ENCODE measurements at regions of chr21 and their contacts with region 1.

Region 1: GRCh38 chr21:46183910-46184624 is at the start of gene SPATC1L:
- DNase-seq: no peak
- H3K4me3 ChIP-seq: peak within 1 kb of the TSS; percentile 58
- H3K27ac ChIP-seq: no peak within 1 kb of the TSS
- H3K27me3 ChIP-seq: no peaks in the 10 kb centered on the region
- CTCF ChIP-seq: no peak
- polyA plus RNA-seq, gene SPATC1L: 1.6 and 2.9 TPM in 2 replicates

Region 2: GRCh38 chr21:45930231-45930760 is 253.8 kb before region 1 on chr21:
- CTCF ChIA-PET with region 1: interaction called, 17 read pairs
- POLR2A ChIA-PET with region 1: no interaction called
- DNase-seq: no peak
- H3K4me3 ChIP-seq: no peak overlapping the region
- H3K27ac ChIP-seq: no peak overlapping the region
- H3K27me3 ChIP-seq: peaks cover 5% of the 10 kb centered on the region
- CTCF ChIP-seq: no peak

Region 3: DNA sequence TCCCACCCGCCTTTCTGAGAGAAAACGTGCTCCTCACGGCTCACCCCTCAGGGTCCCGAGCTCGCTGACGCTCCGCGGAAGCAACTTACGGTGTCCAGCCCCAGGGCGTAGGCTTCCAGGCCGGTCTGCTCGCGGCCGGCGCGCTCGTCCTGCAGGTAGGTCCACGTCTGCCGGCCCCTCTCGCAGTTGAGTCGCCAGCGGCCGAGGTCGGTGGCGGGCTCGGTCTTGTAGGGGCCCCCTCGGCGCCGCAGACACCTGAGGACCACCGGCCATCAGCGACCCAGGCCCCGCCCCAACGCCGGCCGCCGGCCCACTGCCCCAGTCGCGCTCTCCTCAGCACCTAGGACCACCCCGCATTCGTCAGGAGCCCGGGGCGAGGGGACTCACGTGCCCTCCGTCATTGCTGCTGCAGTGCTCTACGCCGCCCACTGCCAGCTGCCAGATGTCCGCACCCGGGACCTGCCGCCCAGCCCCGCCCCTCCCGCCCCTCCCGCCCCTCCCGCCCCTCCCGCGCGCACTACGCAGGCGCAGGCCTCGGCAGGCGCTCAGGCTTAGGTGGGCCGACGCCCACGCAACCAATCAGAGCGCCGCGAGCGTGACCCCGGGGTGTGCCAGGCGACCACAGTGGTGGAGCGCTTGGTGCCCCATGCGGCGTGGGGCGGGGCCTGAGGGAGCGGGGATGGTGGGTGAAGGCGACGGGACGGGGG is 44.4 kb after region 1 on chr21 and contains the start of gene LSS:
- CTCF ChIA-PET with region 1: no interaction called
- POLR2A ChIA-PET with region 1: no interaction called
- DNase-seq: peak; percentile 95
- H3K4me3 ChIP-seq: peak within 1 kb of the TSS; percentile 89
- H3K27ac ChIP-seq: peak within 1 kb of the TSS; percentile 52
- H3K27me3 ChIP-seq: no peaks in the 10 kb centered on the region
- CTCF ChIP-seq: no peak
- polyA plus RNA-seq, gene LSS: 49.0 and 62.8 TPM in 2 replicates

Measured in AG04450 (cell line).